Gastrocnemius medialis (tissue), 4 donors: ENCODE measurements at regions of chr6 and their contacts with region 1.

Region 1: GRCh38 chr6:17410281-17410680 is 16.9 kb downstream of the CAP2 start:
- DNase-seq: no peak
- ATAC-seq: no peak
- H3K4me3 ChIP-seq: no peak overlapping the region
- H3K27ac ChIP-seq: peak overlapping the region; percentile 96 to 97 (median 96)
- H3K4me1 ChIP-seq: peaks cover 36 to 57% of the 10 kb centered on the region in 2 donors
- H3K27me3 ChIP-seq: no peaks in the 10 kb centered on the region
- CTCF ChIP-seq: no peak
- POLR2A ChIP-seq: no peak

Region 2: GRCh38 chr6:17429383-17430061 is 19.2 kb after region 1 on chr6:
- in situ Hi-C with region 1: no loop called
- intact Hi-C with region 1: loop called (anchors 1 kb)
- DNase-seq: peak; percentile 76 to 81
- ATAC-seq: peak; percentile 85 to 86
- H3K4me3 ChIP-seq: no peak overlapping the region
- H3K27ac ChIP-seq: peak overlapping the region; percentile 96 to 98 (median 96)
- H3K4me1 ChIP-seq: peaks cover 48 to 52% of the 10 kb centered on the region in 2 donors
- H3K27me3 ChIP-seq: no peaks in the 10 kb centered on the region
- CTCF ChIP-seq: no peak
- POLR2A ChIP-seq: peak; percentile 73 to 87